ENCODE measurements at regions of chr19 and their contacts with region 1.

Region 1: DNA sequence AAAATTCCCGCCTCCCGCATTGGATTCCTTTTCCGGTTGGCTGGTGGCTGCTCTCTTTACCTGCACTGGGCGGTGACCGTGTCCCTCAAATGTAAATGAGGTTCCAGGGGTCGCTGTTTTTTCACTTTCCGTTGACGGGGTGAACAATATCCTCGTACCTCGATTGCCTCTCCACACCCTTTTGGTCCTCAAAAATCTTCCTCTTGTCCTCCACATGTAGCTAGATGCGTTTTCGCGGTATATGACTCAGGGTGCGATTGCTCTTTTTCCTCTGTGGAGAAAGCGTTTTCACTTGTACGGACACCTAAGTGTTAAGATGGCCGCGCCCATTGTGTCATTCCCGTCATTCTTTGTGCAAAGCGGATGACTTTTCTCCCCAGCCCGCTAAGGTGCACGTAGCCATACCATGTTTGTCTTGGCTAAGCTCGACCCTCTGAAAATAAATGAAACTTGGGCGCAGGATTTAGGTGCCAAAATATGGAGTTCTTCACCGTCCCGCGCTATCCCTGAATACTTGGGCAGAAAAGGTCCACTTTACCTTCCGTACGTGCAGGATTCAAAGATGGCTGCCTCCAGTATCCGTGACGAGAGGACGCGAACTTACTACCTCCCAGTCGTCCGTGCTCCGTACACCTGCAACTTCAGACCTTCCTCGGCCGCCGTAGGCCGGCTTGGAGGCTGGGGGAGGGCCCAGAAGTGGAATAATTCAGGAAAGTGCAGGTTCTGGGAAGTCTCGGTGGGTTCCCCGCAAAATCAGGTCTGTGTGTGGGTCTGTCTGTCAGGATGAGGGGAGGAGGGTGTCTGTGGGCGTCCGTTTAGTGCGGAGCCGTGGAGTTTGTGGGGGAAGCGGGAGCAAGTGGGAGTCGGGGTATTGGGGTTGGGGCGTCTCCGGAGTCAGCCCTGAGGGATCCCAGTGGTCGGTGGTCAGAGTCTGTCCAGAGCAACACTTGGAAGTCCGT is at the start of gene ZNF613:
- DNase-seq: peak; percentile 89 to 93 (median 92)
- ATAC-seq: peak; percentile 97 to 99 (median 98)
- H3K4me3 ChIP-seq: peak within 1 kb of the TSS; percentile 60 to 95 (median 84)
- H3K27ac ChIP-seq: peak within 1 kb of the TSS; percentile 81 to 97 (median 88)
- H3K4me1 ChIP-seq: peaks cover 0 to 13% (median 8%) of the 10 kb centered on the region in 12 donors
- H3K27me3 ChIP-seq: no peaks in the 10 kb centered on the region
- CTCF ChIP-seq: peak in 9 of 12 donors; percentile 12 to 50 (median 33)
- POLR2A ChIP-seq: no peak
- total RNA-seq, gene ZNF613: 3.1 to 6.8 (median 4.3) TPM

Region 2: GRCh38 chr19:51887522-51888498 is 39.3 kb before region 1 on chr19 and contains the start of gene ZNF577:
- intact Hi-C with region 1: loop called in 1 of 10 experiments (anchors 5 kb)
- DNase-seq: peak; percentile 94 to 97 (median 94)
- ATAC-seq: peak; percentile 98 to 99 (median 99)
- H3K4me3 ChIP-seq: peak within 1 kb of the TSS; percentile 51 to 84 (median 74)
- H3K27ac ChIP-seq: peak within 1 kb of the TSS; percentile 51 to 89 (median 77)
- H3K4me1 ChIP-seq: peaks cover 0 to 13% (median 7%) of the 10 kb centered on the region in 12 donors
- H3K27me3 ChIP-seq: no peaks in the 10 kb centered on the region
- CTCF ChIP-seq: no peak
- POLR2A ChIP-seq: no peak
- total RNA-seq, gene ZNF577: 6.2 to 12.8 (median 7.7) TPM

Region 3: DNA sequence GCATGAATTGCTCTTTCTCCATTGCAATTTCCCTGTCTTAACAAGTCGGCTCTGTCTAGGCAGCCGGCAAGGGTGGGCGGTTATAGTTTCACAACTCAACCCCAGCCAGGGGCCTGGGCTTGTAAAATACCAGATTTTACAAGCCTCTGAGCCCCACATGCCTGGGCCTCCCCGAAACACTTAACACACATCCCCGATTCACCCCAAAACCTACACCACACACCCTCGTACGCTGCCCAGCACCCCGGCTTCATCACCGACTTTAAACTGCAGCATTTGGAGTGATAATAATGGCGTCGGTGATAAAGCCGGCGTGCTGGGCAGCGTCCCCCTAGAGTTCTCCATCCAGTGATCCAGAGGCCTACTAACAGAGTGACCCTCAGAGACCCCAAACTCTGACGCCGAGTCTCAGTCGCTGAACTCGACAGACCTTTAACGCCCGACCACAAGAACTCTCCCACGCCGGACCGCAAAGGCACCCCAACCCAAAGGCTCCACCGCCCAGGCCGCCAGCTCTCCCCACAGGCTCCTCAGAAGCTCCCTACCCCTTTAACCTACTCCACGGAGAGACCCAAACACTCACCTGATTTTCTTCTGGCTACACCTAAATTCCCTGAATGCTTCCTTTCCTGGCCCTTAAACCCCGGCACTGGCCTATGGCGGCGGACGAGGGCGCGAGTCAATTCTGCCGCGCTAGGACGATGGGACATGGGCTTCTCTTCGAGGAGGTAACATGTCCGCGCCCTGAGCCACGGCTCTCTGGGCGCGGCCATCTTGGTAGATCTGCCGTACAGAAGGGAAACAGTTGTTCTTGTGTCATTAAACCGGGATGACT is 22.5 kb before region 1 on chr19 and contains the start of gene ZNF649:
- intact Hi-C with region 1: loop called in 2 of 10 experiments (anchors 2 kb)
- DNase-seq: peak; percentile 84 to 91 (median 86)
- ATAC-seq: peak; percentile 98 to 100 (median 100)
- H3K4me3 ChIP-seq: peak within 1 kb of the TSS; percentile 60 to 93 (median 76)
- H3K27ac ChIP-seq: peak within 1 kb of the TSS; percentile 18 to 89 (median 86)
- H3K4me1 ChIP-seq: peaks cover 0 to 15% (median 9%) of the 10 kb centered on the region in 12 donors
- H3K27me3 ChIP-seq: peaks cover 0 to 33% (median 10%) of the 10 kb centered on the region in 9 donors
- CTCF ChIP-seq: peak in 4 of 12 donors; percentile 12 to 32 (median 23)
- POLR2A ChIP-seq: no peak
- total RNA-seq, gene ZNF649: 4.6 to 11.9 (median 8.6) TPM

Region 4: GRCh38 chr19:51986309-51987291 is 59.5 kb after region 1 on chr19 and contains the start of gene ZNF350:
- intact Hi-C with region 1: loop called in 4 of 10 experiments (anchors 2 to 5 kb)
- DNase-seq: peak; percentile 90 to 96 (median 94)
- ATAC-seq: peak; percentile 98 to 100 (median 100)
- H3K4me3 ChIP-seq: peak within 1 kb of the TSS; percentile 66 to 94 (median 81)
- H3K27ac ChIP-seq: peak within 1 kb of the TSS in 11 of 12 donors; percentile 40 to 82 (median 73)
- H3K4me1 ChIP-seq: peaks cover 0 to 17% (median 12%) of the 10 kb centered on the region in 12 donors
- H3K27me3 ChIP-seq: no peaks in the 10 kb centered on the region
- CTCF ChIP-seq: peak in 1 of 12 donors; percentile 14
- POLR2A ChIP-seq: no peak
- total RNA-seq, gene ZNF350: 3.4 to 10.7 (median 7.6) TPM

Region 5: DNA sequence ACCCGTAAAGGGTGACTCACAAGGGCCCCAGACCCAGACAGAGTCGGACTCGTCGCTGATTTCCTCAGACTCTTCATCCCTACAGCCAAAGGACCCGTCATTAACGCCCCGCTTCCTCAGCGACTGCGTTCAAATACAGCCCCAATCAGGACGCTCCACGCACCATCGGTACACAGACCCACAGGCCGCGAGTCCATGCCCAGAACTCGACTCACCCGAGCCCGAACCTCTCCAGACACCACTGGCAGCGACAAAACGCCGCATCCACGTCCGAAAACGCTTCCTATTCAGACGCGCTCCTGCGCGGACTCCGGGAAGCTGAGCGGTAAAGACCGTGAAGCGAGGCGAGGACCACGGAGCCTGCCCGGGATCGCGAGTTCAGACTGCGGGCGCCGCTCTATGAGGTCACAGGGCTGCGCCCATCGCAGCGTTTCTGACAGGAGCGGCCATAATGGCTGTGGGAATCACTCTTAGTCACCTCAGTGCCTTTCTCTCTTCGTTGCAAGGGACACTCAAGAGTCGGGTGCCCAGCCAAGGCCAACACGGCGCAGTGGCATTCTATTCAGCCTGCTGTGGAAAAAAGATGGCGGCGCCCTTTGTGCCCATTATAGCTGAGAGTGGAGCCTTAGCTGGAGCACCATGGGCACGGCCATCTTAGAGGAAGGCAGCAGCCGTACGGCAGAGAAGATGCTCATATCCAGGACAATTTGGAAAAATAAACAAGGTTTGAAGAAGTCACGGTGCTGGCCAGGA is 101.1 kb after region 1 on chr19 and contains the start of gene ZNF614:
- intact Hi-C with region 1: no loop called
- DNase-seq: peak; percentile 88 to 92 (median 90)
- ATAC-seq: peak; percentile 96 to 99 (median 98)
- H3K4me3 ChIP-seq: peak within 1 kb of the TSS; percentile 67 to 92 (median 78)
- H3K27ac ChIP-seq: peak within 1 kb of the TSS; percentile 85 to 98 (median 92)
- H3K4me1 ChIP-seq: peaks cover 0 to 20% (median 13%) of the 10 kb centered on the region in 12 donors
- H3K27me3 ChIP-seq: no peaks in the 10 kb centered on the region
- CTCF ChIP-seq: no peak
- POLR2A ChIP-seq: peak in 1 of 2 donors; percentile 40
- total RNA-seq, gene ZNF614: 4.6 to 7.9 (median 6.8) TPM

Region 6: DNA sequence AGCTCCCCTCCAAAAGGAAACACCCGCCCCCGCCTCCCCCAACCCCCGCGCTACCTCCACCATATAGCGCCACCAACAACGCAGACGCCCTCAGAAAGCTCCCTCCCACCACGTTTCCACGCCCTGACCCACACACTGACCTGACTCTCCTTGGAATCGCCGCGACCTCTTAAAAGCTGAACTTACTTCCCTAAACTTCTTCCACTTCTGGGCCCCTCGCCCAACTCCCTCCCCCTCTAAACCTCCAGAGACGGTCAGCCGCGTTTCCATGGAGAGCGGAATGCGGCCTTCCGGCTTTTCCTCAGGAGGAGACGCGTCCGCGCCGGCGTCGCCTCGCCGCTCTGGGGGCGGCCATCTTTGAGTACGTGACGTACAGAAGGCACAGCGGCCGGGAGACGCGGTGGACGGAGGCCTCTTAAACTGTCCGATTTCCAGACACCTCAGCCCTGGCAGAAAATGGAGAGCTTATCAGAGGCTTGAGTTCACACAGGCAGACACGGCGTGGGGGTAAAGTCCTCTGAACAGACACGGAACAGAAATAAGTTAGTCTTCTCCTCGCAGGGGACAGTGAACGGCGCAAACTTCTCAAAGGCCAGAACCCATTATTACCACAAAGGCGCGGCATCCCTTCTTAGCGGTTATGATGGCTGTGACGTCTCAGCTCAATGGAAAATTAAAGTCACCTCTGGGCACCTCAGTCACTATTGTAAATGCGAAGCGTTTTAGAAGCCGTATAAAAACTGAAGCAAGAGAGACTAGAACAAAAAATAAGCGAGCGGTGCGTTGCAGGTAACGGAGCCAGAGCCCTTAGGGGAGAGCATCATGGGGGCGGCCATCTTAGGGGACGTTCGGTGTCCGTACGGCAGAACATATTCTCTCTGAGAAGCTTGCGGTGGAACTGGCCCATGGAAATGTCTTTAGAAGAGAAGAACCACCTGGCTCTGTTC is 121.8 kb after region 1 on chr19 and contains the start of gene ZNF432:
- intact Hi-C with region 1: loop called in 1 of 10 experiments (anchors 2 kb)
- DNase-seq: peak; percentile 95 to 98 (median 95)
- ATAC-seq: peak; percentile 97 to 99 (median 98)
- H3K4me3 ChIP-seq: peak within 1 kb of the TSS; percentile 48 to 76 (median 68)
- H3K27ac ChIP-seq: peak within 1 kb of the TSS; percentile 71 to 99 (median 94)
- H3K4me1 ChIP-seq: peaks cover 0 to 19% (median 7%) of the 10 kb centered on the region in 12 donors
- H3K27me3 ChIP-seq: no peaks in the 10 kb centered on the region
- CTCF ChIP-seq: no peak
- POLR2A ChIP-seq: peak in 1 of 2 donors; percentile 38
- total RNA-seq, gene ZNF432: 3.4 to 10.9 (median 8.2) TPM